Activated naive CD4-positive, alpha-beta T cell treated with anti-CD3 and anti-CD28 coated beads, Interleukin-2, amount 10 ng/mL, durations not matched to agents 7 days and 5 days (primary cell): ENCODE measurements at regions of chr1 and their contacts with region 1.

Region 1: GRCh38 chr1:32063261-32063681 is 9.5 kb upstream of the TMEM39B start:
- DNase-seq: no peak
- H3K4me3 Mint-ChIP-seq: no peak overlapping the region
- H3K27ac Mint-ChIP-seq: peak overlapping the region; percentile 60
- H3K4me1 Mint-ChIP-seq: peaks cover 22% of the 10 kb centered on the region
- H3K27me3 Mint-ChIP-seq: peaks cover 9% of the 10 kb centered on the region

Region 2: GRCh38 chr1:32052887-32053286 is 10.4 kb before region 1 on chr1:
- CTCF ChIA-PET with region 1: interaction called, 14 read pairs
- DNase-seq: no peak
- H3K4me3 Mint-ChIP-seq: no peak overlapping the region
- H3K27ac Mint-ChIP-seq: no peak overlapping the region
- H3K4me1 Mint-ChIP-seq: no peaks in the 10 kb centered on the region
- H3K27me3 Mint-ChIP-seq: no peaks in the 10 kb centered on the region

Region 3: DNA sequence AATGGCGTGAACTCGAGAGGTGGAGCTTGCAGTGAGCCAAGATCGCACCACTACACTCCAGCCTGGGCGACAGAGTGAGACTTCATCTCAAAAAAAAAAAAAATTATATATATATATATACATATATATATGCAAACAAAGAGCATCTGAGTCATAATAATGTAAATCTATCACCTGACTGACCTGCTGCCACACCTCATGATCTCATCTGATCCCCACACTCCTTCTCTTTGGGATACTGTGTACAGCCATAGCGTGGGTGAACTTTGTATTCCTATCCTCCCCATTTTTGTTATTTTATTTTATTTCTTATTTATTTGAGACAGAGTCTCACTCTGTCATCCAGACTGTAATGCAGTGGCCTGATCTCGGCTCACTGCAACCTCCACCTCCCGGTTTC is 226.0 kb after region 1 on chr1:
- CTCF ChIA-PET with region 1: no interaction called
- DNase-seq: no peak
- H3K4me3 Mint-ChIP-seq: no peak overlapping the region
- H3K27ac Mint-ChIP-seq: no peak overlapping the region
- H3K4me1 Mint-ChIP-seq: peaks cover 35% of the 10 kb centered on the region
- H3K27me3 Mint-ChIP-seq: peaks cover 9% of the 10 kb centered on the region